Naive thymus-derived CD4-positive, alpha-beta T cell (primary cell): ENCODE measurements at regions of chr1 and their contacts with region 1.

Region 1: DNA sequence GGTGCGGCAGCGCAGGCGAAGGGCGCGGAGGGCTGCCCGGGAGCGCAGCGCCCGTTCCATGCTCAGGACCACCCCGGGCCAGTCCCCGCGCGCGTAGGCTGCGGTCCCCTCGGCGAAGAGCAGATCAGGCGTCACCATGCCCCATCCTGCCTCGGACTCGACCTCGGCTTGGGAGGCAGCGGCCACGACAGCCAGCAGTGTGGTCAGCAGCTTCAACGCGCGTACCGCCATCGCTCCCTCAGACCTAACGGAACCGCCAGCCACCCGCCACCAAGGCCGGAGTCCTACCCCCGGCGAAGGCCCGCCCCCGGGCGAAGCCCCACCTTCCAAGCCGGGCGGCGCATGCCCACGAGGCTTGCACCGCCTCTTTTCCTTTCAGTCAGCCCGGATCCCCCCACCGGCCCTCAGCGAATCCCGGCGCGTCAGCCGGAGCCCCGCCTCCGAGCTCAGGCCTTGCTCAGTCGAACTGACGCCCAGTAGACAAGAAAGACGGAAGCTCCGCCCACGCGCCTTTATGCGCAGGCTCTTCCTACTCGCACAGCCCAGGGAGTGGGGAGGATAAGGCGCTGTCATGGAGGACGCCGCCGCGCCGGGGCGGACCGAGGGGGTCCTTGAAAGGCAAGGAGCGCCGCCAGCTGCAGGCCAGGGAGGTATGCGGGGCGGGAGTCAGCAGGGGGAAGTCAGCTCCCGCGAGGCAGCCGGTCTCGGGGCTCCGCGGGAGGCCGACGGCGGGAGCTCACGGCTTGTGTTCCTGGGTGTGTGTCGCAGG is at the starts of genes C1orf50 and P3H1:
- DNase-seq: peak; percentile 98 to 100 (median 100)
- ATAC-seq: peak; percentile 96
- H3K4me3 ChIP-seq: peak within 1 kb of the TSS; percentile 91
- H3K4me3 Mint-ChIP-seq: peak within 1 kb of the TSS in 1 of 10 donors; percentile 92
- H3K27ac ChIP-seq: peak within 1 kb of the TSS; percentile 84
- H3K27ac Mint-ChIP-seq: peak within 1 kb of the TSS in 8 of 9 donors; percentile 70 to 96 (median 92)
- H3K4me1 ChIP-seq: peaks cover 25 to 35% of the 10 kb centered on the region in 2 donors
- H3K4me1 Mint-ChIP-seq: peaks cover 20 to 50% (median 32%) of the 10 kb centered on the region in 7 donors
- H3K27me3 ChIP-seq: no peaks in the 10 kb centered on the region
- H3K27me3 Mint-ChIP-seq: no peaks in the 10 kb centered on the region
- total RNA-seq, gene C1orf50: 7.0 to 20.8 (median 18.1) TPM
- total RNA-seq, gene P3H1: 32.5 to 61.8 (median 47.3) TPM

Region 2: DNA sequence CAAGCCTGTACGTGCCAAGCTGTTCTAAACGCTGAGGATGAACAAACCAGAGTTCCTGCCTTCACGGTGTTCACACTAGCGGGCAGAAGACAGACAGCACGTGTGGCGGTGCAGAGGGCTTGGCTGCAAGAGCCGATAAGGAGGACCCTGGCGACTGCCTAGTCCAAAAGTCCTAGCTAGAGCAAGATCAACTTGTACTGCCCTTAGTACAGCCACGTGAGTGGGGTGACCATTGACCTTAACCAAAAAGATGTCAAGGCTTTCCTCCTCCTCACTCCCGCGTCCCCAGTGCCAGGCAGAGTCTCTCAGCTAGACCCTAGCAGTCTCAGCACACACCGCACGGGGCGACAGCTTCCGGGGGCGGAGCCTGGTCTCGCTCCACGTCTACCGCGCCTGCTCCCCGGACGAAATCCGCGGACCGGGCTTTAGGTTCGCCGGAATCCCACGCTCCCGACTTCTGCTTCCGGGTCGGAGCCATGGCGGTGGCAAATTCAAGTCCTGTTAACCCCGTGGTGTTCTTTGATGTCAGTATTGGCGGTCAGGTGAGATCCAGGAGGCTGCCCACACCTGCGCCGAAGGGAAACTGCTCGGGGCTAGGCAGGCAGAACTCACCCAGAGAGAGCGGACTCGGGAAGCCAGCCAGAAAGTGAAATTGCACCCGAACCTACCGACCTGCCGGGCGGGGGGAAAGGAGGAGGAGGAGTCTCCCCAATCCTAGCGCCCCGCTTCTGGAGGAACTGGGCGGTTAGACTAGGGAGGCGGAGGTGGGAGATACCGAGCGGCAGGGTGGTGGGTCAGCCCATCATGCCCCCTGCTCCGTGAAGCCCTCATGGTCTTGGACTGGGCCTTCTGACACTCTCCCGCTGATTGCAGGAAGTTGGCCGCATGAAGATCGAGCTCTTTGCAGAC is 108.7 kb before region 1 on chr1 and contains the start of gene PPIH:
- CTCF ChIA-PET with region 1: no interaction called
- POLR2A ChIA-PET with region 1: interaction called, 12 read pairs
- intact Hi-C with region 1: loop called (anchors 1 kb)
- DNase-seq: peak; percentile 82 to 94 (median 92)
- ATAC-seq: peak; percentile 99
- H3K4me3 ChIP-seq: peak within 1 kb of the TSS; percentile 90
- H3K4me3 Mint-ChIP-seq: peak within 1 kb of the TSS; percentile 94 to 99 (median 99)
- H3K27ac ChIP-seq: peak within 1 kb of the TSS; percentile 75
- H3K27ac Mint-ChIP-seq: peak within 1 kb of the TSS; percentile 84 to 98 (median 96)
- H3K4me1 ChIP-seq: peaks cover 17 to 22% of the 10 kb centered on the region in 2 donors
- H3K4me1 Mint-ChIP-seq: peaks cover 20 to 48% (median 44%) of the 10 kb centered on the region in 7 donors
- H3K27me3 ChIP-seq: no peaks in the 10 kb centered on the region
- H3K27me3 Mint-ChIP-seq: peaks cover 0 to 3% (median 0%) of the 10 kb centered on the region in 5 donors
- total RNA-seq, gene PPIH: 28.0 to 76.8 (median 40.7) TPM

Region 3: GRCh38 chr1:42784946-42785693 is 18.2 kb after region 1 on chr1 and contains the start of gene TMEM269:
- CTCF ChIA-PET with region 1: interaction called, 3 read pairs
- POLR2A ChIA-PET with region 1: interaction called, 10 read pairs
- intact Hi-C with region 1: loop called in 1 of 2 experiments (anchors 1 kb)
- DNase-seq: peak; percentile 30 to 53 (median 45)
- ATAC-seq: peak; percentile 83
- H3K4me3 ChIP-seq: peak within 1 kb of the TSS; percentile 56
- H3K4me3 Mint-ChIP-seq: peak within 1 kb of the TSS; percentile 85 to 92 (median 89)
- H3K27ac ChIP-seq: peak within 1 kb of the TSS; percentile 29
- H3K27ac Mint-ChIP-seq: peak within 1 kb of the TSS; percentile 35 to 87 (median 65)
- H3K4me1 ChIP-seq: peaks cover 5 to 12% of the 10 kb centered on the region in 2 donors
- H3K4me1 Mint-ChIP-seq: peaks cover 12 to 34% (median 25%) of the 10 kb centered on the region in 7 donors
- H3K27me3 ChIP-seq: no peaks in the 10 kb centered on the region
- H3K27me3 Mint-ChIP-seq: no peaks in the 10 kb centered on the region
- total RNA-seq, gene TMEM269: 0.19 to 2.0 (median 0.35) TPM